Activated CD4-positive, alpha-beta T cell treated with anti-CD3 and anti-CD28 coated beads for 36 hours (primary cell): ENCODE measurements at regions of chr6 and their contacts with region 1.

Region 1: GRCh38 chr6:89895276-89895874 is 1.1 kb downstream of the GJA10 start:
- DNase-seq: peak; percentile 26
- ATAC-seq: no peak
- H3K4me3 Mint-ChIP-seq: no peak overlapping the region
- H3K27ac Mint-ChIP-seq: no peak overlapping the region
- H3K4me1 Mint-ChIP-seq: peaks cover 5% of the 10 kb centered on the region
- H3K27me3 Mint-ChIP-seq: peaks cover 25% of the 10 kb centered on the region

Region 2: DNA sequence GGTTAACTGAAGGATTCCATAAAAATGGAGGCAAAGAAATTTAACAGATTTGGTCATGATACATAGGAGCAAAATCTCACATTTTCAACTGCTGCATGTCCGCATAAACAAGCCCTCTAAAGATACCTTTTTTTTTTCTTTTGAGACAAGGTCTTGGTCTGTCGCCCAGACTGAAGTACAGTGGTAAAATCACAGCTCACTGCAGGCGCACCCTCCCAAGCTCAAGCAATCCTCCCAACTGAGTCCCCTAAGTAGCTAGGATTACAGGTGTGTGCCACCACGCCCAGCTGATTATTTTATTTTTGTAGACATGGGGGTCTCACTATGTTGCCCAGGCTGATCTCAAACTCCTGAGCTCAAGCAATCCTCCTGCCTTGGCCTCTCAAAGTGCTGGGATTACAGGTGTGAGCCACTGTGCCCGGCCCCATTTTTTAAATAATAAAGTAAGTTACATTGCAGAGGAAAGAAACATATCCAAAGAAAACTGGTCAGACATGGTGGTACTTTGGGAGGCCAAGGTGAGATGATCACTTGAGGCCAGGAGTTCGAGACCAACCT is 89.5 kb before region 1 on chr6:
- CTCF ChIA-PET with region 1: no interaction called
- POLR2A ChIA-PET with region 1: no interaction called
- intact Hi-C with region 1: no loop called
- DNase-seq: no peak
- ATAC-seq: no peak
- H3K4me3 Mint-ChIP-seq: no peak overlapping the region
- H3K27ac Mint-ChIP-seq: no peak overlapping the region
- H3K4me1 Mint-ChIP-seq: peaks cover 14% of the 10 kb centered on the region
- H3K27me3 Mint-ChIP-seq: no peaks in the 10 kb centered on the region

Region 3: GRCh38 chr6:89925826-89926225 is 30.5 kb after region 1 on chr6:
- CTCF ChIA-PET with region 1: no interaction called
- POLR2A ChIA-PET with region 1: no interaction called
- intact Hi-C with region 1: loop called in 1 of 2 experiments (anchors 1 kb)
- DNase-seq: no peak
- ATAC-seq: peak; percentile 28
- H3K4me3 Mint-ChIP-seq: no peak overlapping the region
- H3K27ac Mint-ChIP-seq: no peak overlapping the region
- H3K4me1 Mint-ChIP-seq: peaks cover 45% of the 10 kb centered on the region
- H3K27me3 Mint-ChIP-seq: no peaks in the 10 kb centered on the region

Region 4: DNA sequence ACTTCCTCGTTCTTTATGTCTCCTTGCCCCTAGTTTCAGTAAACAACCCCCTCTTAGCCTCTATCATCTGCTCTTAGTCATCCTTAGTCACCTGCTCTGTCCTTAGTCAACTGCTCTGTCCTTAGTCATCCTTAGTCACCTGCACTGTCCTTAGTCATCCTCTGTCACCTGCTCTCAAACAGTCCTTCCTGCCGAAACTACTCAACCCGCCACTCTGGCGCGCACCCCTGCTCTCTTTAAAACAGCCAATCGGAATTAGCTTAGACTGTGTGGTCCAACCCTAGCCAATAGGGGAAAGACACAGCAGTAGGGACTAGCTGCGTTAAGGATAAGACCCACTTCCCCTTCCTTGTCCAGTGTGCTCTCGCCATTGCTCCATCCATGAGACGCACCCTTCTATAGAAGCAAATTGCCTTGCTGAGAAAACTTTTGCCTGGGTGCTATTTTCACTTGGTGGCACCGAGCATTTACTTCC is 327.4 kb after region 1 on chr6:
- CTCF ChIA-PET with region 1: no interaction called
- POLR2A ChIA-PET with region 1: no interaction called
- intact Hi-C with region 1: no loop called
- DNase-seq: peak; percentile 74
- ATAC-seq: peak; percentile 65
- H3K4me3 Mint-ChIP-seq: peak overlapping the region; percentile 0
- H3K27ac Mint-ChIP-seq: peak overlapping the region; percentile 44
- H3K4me1 Mint-ChIP-seq: peaks cover 50% of the 10 kb centered on the region
- H3K27me3 Mint-ChIP-seq: no peaks in the 10 kb centered on the region

Region 5: DNA sequence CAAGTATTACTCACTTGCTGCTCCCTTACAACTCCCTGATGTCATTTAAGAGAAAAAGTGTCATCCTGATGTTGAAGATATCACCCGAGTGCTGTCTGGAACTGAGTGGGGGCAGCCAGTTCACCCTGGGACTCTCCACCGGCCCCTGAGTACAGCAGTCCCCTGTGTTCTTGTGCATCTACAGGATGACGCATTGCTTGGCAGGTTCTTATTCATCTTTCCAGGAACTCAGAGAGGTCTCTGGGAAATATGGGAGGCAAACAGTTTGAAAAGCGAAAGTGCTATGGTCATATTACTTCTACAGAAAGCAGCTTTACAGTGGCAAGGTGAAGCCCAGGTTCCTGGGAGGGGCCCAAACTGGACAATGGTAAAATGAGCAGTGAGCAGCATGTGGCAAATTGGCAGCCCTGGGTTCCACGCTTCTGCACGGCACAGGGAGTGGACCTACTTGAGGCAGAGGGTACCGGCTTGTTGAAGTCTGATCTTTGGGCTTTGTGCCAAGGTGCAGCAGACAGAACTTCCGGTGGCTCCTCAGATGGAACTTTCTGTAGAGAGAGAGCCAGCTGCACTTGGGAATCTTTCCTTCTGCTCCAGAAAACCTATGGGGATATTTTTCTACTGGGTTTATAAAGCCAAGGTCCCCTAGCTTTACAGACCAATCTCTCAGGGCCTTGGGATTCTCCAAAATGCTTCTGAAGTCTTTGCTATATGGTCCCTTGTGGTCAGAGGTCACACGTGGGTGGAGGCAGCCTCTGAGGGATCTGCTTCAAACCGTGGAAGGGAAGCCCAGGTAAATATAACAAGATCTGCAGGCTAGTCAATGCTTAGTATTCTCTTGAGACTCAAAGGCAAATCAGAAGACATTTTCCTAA is 563.2 kb after region 1 on chr6:
- CTCF ChIA-PET with region 1: no interaction called
- POLR2A ChIA-PET with region 1: no interaction called
- intact Hi-C with region 1: no loop called
- DNase-seq: peak; percentile 93
- ATAC-seq: peak; percentile 89
- H3K4me3 Mint-ChIP-seq: peak overlapping the region; percentile 63
- H3K27ac Mint-ChIP-seq: peak overlapping the region; percentile 99
- H3K4me1 Mint-ChIP-seq: peaks cover 92% of the 10 kb centered on the region
- H3K27me3 Mint-ChIP-seq: no peaks in the 10 kb centered on the region